SK-MEL-5 (cell line): ENCODE measurements at regions of chr14 and their contacts with region 1.

Region 1: DNA sequence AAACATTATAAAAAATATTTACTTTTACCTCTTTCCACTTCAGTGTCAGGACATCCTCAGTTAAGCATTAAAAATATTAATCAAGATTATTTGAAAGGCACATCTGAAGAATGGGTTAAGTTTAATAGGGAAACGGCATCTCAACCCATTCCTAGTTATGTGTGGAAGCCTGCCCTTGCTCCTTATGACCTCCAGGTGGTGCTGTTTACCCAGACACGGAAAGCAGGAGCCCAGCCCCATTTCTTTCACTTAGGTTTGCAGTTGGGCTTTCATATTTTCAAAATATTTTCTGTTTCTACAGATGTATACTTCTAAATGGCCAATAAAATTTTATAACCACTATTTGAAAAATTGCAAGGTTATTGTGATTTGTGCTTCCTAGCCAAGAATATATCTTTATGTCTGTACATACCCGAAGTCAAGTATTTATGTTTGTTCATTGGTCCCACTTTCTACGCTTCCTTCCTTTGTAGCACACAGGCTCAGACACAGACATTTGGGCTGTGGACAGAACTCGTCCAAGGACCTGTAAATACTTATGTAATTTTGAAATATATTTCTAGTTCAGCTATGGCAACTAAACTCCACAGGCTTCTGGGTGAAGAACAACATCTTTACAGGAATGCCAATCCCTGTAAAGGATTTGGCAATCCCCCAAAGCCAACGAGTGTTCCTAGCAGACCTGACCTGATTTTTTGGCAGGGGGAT is 247.1 kb downstream of the AKAP6 start:
- DNase-seq: peak; percentile 67

Region 2: GRCh38 chr14:32913719-32914118 is 337.5 kb after region 1 on chr14:
- in situ Hi-C with region 1: loop called (anchors 25 kb)
- DNase-seq: peak; percentile 77

Region 3: DNA sequence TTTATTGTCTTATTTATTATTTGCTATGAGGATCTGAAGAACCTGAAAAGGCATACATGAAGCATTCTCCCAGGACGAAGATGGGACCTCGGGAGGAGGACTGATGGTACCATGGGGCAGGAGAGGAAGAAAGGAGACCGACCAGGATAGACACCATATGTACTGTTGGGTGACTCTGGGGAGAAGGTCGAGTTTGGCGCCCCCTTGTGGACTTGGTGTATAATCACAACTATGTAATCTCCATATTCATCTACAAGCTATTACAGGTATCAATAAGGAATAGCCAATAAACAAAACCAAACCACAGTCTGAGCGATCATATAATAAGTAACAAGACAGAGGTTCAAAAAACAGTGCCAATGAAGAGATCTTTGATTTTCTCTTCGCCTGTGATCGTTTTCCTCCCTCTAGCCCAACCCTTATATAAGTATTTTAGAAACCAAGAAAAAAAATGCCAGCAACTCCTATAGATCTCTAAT is 1746.7 kb after region 1 on chr14:
- in situ Hi-C with region 1: loop called (anchors 25 kb)
- DNase-seq: peak; percentile 78